CD8-positive, alpha-beta T cell (primary cell): ENCODE measurements at regions of chr3 and their contacts with region 1.

Region 1: DNA sequence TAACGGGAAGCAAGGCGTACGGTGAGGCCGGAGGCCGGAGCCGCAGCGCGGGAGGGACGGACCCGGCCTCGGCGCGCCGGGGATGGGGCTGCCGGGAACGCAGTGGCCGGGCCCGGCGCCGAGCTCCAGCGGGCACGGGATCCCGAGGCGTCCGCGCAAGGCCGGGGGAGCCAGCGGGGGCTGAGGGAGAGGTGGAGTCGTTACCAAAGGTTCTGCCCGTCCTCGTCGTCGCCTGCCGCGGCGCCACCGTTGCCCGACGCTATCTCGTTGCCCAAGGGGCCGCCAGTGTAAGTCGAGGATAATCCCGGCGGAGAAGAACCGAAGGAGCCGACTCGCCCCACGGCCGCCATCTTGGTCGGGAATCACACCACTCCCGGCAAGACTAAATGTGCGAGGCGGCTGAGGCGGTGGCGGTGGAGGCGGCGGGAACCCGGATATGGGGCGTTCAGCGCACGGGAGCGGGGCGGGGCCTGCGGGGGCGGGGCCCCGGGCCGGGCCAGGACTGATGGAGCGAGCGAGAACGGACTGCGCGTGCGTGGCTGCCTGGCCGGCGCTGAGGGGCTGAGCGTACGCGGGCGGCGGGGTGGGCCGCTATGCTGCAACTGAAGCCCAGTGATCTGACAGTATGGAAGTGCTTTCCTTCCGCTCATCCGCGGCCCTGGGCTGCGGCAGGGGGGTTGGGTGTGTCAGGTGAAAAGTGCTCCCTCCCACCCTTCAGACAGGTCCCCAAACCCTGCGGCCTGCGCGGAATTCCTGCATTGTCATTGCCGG is at the start of gene DYNC1LI1:
- DNase-seq: peak; percentile 84 to 97 (median 93)
- ATAC-seq: peak; percentile 95
- H3K4me3 ChIP-seq: peak within 1 kb of the TSS; percentile 72 to 96
- H3K4me3 Mint-ChIP-seq: peak within 1 kb of the TSS; percentile 94
- H3K27ac ChIP-seq: peak within 1 kb of the TSS; percentile 71 to 87
- H3K27ac Mint-ChIP-seq: peak within 1 kb of the TSS; percentile 94
- H3K4me1 ChIP-seq: peaks cover 8% of the 10 kb centered on the region
- H3K4me1 Mint-ChIP-seq: peaks cover 34% of the 10 kb centered on the region
- H3K27me3 ChIP-seq: no peaks in the 10 kb centered on the region
- H3K27me3 Mint-ChIP-seq: no peaks in the 10 kb centered on the region
- CTCF ChIP-seq: no peak
- total RNA-seq, gene DYNC1LI1: 29.2 to 36.1 TPM

Region 2: GRCh38 chr3:32106280-32106928 is 464.2 kb before region 1 on chr3 and contains the start of gene GPD1L:
- CTCF ChIA-PET with region 1: no interaction called
- POLR2A ChIA-PET with region 1: no interaction called
- intact Hi-C with region 1: loop called (anchors 2 to 5 kb)
- DNase-seq: peak; percentile 84 to 95 (median 90)
- ATAC-seq: peak; percentile 97
- H3K4me3 ChIP-seq: peak within 1 kb of the TSS; percentile 70 to 80
- H3K4me3 Mint-ChIP-seq: peak within 1 kb of the TSS; percentile 91
- H3K27ac ChIP-seq: peak within 1 kb of the TSS; percentile 46 to 57
- H3K27ac Mint-ChIP-seq: peak within 1 kb of the TSS; percentile 67
- H3K4me1 ChIP-seq: peaks cover 13% of the 10 kb centered on the region
- H3K4me1 Mint-ChIP-seq: peaks cover 33% of the 10 kb centered on the region
- H3K27me3 ChIP-seq: no peaks in the 10 kb centered on the region
- H3K27me3 Mint-ChIP-seq: no peaks in the 10 kb centered on the region
- CTCF ChIP-seq: no peak
- total RNA-seq, gene GPD1L: 9.5 to 9.8 TPM

Region 3: GRCh38 chr3:32391643-32392535 is 178.7 kb before region 1 on chr3 and contains the start of gene CMTM7:
- CTCF ChIA-PET with region 1: no interaction called
- POLR2A ChIA-PET with region 1: no interaction called
- intact Hi-C with region 1: loop called in 1 of 2 experiments (anchors 10 kb)
- DNase-seq: peak; percentile 26 to 79 (median 61)
- ATAC-seq: peak; percentile 63
- H3K4me3 ChIP-seq: peak within 1 kb of the TSS; percentile 69 to 70
- H3K4me3 Mint-ChIP-seq: peak within 1 kb of the TSS; percentile 97
- H3K27ac ChIP-seq: peak within 1 kb of the TSS; percentile 73 to 77
- H3K27ac Mint-ChIP-seq: peak within 1 kb of the TSS; percentile 98
- H3K4me1 ChIP-seq: peaks cover 29% of the 10 kb centered on the region
- H3K4me1 Mint-ChIP-seq: peaks cover 65% of the 10 kb centered on the region
- H3K27me3 ChIP-seq: no peaks in the 10 kb centered on the region
- H3K27me3 Mint-ChIP-seq: no peaks in the 10 kb centered on the region
- CTCF ChIP-seq: no peak
- total RNA-seq, gene CMTM7: 18.8 to 19.5 TPM

Region 4: GRCh38 chr3:32488474-32489008 is 82.1 kb before region 1 on chr3:
- CTCF ChIA-PET with region 1: no interaction called
- POLR2A ChIA-PET with region 1: no interaction called
- intact Hi-C with region 1: no loop called
- DNase-seq: no peak
- ATAC-seq: no peak
- H3K4me3 ChIP-seq: no peak overlapping the region
- H3K4me3 Mint-ChIP-seq: no peak overlapping the region
- H3K27ac ChIP-seq: no peak overlapping the region
- H3K27ac Mint-ChIP-seq: no peak overlapping the region
- H3K4me1 ChIP-seq: peaks cover 4% of the 10 kb centered on the region
- H3K4me1 Mint-ChIP-seq: peaks cover 11% of the 10 kb centered on the region
- H3K27me3 ChIP-seq: no peaks in the 10 kb centered on the region
- H3K27me3 Mint-ChIP-seq: no peaks in the 10 kb centered on the region
- CTCF ChIP-seq: no peak

Region 5: DNA sequence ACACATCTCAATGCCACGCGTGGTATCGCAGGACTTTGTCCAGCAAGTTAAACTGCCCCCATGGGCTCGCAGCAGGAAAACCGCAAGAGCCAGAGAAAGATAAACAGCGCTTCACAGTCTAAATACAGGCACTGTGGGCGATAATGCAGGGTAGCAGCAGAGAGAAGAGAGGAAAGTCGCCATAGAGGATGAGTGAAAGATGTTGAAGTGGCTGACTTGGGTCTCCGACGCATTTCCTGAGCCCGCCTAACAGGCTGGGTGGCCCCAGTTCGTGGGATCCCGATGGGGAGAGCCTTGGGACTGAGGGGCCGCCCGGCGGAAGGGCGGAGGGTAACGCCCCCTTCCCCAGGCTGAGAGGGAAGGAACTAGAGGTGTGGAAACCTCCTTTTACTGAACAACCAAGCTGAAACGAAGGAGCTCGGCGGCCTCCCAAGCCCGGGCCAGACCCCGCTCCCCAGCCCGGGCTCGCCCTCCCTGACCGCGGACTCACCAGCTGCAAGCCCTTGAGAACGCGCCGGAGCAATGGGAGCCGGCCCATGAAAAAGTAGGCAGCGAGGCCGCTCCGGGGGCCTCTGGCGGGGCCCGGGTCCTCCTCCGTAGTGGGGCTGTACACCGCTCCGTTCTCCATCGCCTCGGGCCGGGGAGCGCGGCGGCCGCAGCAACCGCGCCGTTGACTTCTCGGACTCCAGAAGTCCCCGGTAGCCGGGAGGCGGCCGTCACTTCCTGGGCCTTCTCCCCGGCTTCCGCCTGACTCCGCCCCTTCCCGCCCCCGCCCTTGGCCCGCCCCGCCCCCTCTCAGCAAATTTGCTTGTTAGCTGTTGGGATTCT is 68.3 kb before region 1 on chr3 and contains the start of gene CMTM6:
- CTCF ChIA-PET with region 1: no interaction called
- POLR2A ChIA-PET with region 1: no interaction called
- intact Hi-C with region 1: loop called (anchors 1 to 5 kb)
- DNase-seq: peak; percentile 37 to 89 (median 75)
- ATAC-seq: peak; percentile 79
- H3K4me3 ChIP-seq: peak within 1 kb of the TSS; percentile 76 to 86
- H3K4me3 Mint-ChIP-seq: peak within 1 kb of the TSS; percentile 88
- H3K27ac ChIP-seq: peak within 1 kb of the TSS; percentile 94 to 95
- H3K27ac Mint-ChIP-seq: peak within 1 kb of the TSS; percentile 91
- H3K4me1 ChIP-seq: peaks cover 18% of the 10 kb centered on the region
- H3K4me1 Mint-ChIP-seq: peaks cover 32% of the 10 kb centered on the region
- H3K27me3 ChIP-seq: no peaks in the 10 kb centered on the region
- H3K27me3 Mint-ChIP-seq: no peaks in the 10 kb centered on the region
- CTCF ChIP-seq: no peak
- total RNA-seq, gene CMTM6: 34.7 to 35.0 TPM

Region 6: DNA sequence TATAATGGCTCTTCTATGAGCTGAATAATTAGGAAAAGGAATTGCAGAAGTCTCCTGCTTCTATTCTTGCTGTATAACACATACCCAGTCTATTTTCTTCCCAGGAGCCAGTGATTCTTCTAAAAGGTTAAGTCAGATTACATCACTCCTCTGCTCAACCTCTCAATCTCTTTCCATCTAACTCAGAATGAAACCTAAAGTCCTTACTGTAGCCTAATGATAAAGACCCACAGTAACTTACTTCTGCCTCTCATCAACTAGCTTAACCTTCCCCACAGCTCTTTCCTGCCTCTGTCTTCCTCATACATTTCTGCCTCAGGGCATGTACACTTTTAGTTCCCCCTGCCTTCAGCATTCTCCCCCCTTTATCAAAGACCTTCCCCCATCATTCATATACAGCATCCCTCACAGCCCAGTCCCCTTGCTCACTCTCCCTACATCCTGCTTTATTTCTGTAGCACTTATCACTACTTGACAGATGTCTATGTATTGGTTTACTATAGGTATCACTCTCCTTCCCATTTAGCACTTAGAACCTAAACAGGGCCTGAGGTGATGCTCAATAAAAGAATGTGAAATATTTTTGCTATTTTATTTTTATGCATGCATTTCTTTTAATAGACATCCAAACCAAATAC is 39.5 kb before region 1 on chr3:
- CTCF ChIA-PET with region 1: no interaction called
- POLR2A ChIA-PET with region 1: interaction called, 3 read pairs
- intact Hi-C with region 1: loop called in 1 of 2 experiments (anchors 5 kb)
- DNase-seq: no peak
- ATAC-seq: no peak
- H3K4me3 ChIP-seq: no peak overlapping the region
- H3K4me3 Mint-ChIP-seq: no peak overlapping the region
- H3K27ac ChIP-seq: no peak overlapping the region
- H3K27ac Mint-ChIP-seq: peak overlapping the region; percentile 34
- H3K4me1 ChIP-seq: no peaks in the 10 kb centered on the region
- H3K4me1 Mint-ChIP-seq: no peaks in the 10 kb centered on the region
- H3K27me3 ChIP-seq: no peaks in the 10 kb centered on the region
- H3K27me3 Mint-ChIP-seq: no peaks in the 10 kb centered on the region
- CTCF ChIP-seq: no peak

Region 7: DNA sequence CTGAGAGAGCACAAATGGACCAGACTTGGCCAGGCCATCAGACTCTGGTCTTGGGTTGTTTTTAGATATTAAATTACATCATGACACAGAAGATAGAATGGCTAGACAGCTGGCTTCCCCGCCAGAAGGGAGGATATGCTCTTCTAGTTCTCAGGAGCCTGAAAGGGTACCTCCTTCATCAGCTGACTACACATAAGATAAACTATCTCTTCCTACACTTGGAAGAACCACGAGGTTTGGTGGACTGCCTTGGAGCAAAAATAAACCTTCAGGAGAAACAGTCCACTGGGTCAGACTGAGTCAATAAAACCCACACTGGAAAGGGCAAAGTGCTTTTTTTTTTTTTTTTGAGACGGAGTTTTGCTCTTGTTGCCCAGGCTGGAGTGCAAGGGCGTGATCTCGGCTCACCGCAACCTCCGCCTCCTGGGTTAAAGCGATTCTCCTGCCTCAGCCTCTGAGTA is 26.3 kb after region 1 on chr3:
- CTCF ChIA-PET with region 1: no interaction called
- POLR2A ChIA-PET with region 1: no interaction called
- intact Hi-C with region 1: no loop called
- DNase-seq: no peak
- ATAC-seq: no peak
- H3K4me3 ChIP-seq: no peak overlapping the region
- H3K4me3 Mint-ChIP-seq: no peak overlapping the region
- H3K27ac ChIP-seq: no peak overlapping the region
- H3K27ac Mint-ChIP-seq: no peak overlapping the region
- H3K4me1 ChIP-seq: no peaks in the 10 kb centered on the region
- H3K4me1 Mint-ChIP-seq: no peaks in the 10 kb centered on the region
- H3K27me3 ChIP-seq: no peaks in the 10 kb centered on the region
- H3K27me3 Mint-ChIP-seq: peaks cover 12% of the 10 kb centered on the region
- CTCF ChIP-seq: no peak

Region 8: GRCh38 chr3:33096093-33096868 is 525.7 kb after region 1 on chr3:
- CTCF ChIA-PET with region 1: no interaction called
- POLR2A ChIA-PET with region 1: no interaction called
- intact Hi-C with region 1: loop called in 1 of 2 experiments (anchors 5 kb)
- DNase-seq: peak; percentile 16 to 70 (median 42)
- ATAC-seq: peak; percentile 55
- H3K4me3 ChIP-seq: peak overlapping the region; percentile 73 to 97
- H3K4me3 Mint-ChIP-seq: peak overlapping the region; percentile 95
- H3K27ac ChIP-seq: peak overlapping the region; percentile 76
- H3K27ac Mint-ChIP-seq: peak overlapping the region; percentile 89
- H3K4me1 ChIP-seq: peaks cover 7% of the 10 kb centered on the region
- H3K4me1 Mint-ChIP-seq: peaks cover 40% of the 10 kb centered on the region
- H3K27me3 ChIP-seq: no peaks in the 10 kb centered on the region
- H3K27me3 Mint-ChIP-seq: no peaks in the 10 kb centered on the region
- CTCF ChIP-seq: no peak

Region 9: DNA sequence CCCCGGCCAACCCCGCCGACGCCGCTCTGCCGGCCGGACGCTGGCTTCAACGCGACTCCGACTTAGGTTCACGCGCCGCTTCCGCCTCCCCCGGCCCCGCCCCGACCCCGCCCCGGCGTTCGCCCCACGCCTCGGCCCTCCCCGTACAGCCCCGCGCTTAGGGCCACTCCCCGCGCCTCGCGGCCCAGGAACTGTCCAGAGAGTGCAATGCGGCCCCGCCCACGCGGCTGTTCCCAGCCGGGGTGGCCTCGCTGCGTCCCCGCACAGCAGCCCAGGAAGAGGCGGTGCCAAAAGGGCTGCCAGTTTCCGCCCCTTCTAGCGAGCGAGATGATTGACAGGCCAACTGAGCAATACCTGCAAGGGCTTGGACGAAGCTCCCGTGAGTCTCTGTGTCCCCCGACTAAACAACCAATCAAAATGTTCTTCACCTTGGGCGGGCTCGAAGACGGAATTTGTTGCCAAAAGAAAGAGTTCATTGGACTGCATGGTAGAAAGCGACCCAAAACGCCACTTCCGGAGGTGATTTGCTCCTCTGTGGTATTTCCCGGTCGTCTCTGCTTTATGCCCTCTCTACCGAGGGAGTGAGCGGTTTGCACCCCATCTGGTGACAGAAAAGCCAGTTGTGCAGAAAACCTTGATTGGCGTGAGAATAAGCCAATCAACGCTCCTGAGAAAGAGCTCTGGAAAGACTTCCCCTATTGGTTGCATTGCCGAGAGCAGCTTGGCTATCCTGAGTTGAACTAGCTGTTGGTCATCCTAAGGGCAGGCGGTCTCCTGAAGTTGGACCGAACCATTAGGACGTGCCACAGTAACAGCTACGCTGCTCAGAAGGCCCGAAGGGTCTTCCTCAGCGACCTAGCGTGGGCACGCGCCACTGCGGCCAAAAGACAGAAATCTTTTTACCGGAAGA is 870.0 kb after region 1 on chr3 and contains the start of gene UBP1:
- CTCF ChIA-PET with region 1: no interaction called
- POLR2A ChIA-PET with region 1: no interaction called
- intact Hi-C with region 1: loop called (anchors 2 to 5 kb)
- DNase-seq: peak; percentile 90 to 100 (median 95)
- ATAC-seq: peak; percentile 81
- H3K4me3 ChIP-seq: peak within 1 kb of the TSS; percentile 79 to 81
- H3K4me3 Mint-ChIP-seq: peak within 1 kb of the TSS; percentile 100
- H3K27ac ChIP-seq: peak within 1 kb of the TSS; percentile 94 to 96
- H3K27ac Mint-ChIP-seq: peak within 1 kb of the TSS; percentile 100
- H3K4me1 ChIP-seq: peaks cover 33% of the 10 kb centered on the region
- H3K4me1 Mint-ChIP-seq: peaks cover 48% of the 10 kb centered on the region
- H3K27me3 ChIP-seq: no peaks in the 10 kb centered on the region
- H3K27me3 Mint-ChIP-seq: no peaks in the 10 kb centered on the region
- CTCF ChIP-seq: no peak
- total RNA-seq, gene UBP1: 54.4 to 55.9 TPM